GM12878 (cell line): ENCODE measurements at regions of chr17 and their contacts with region 1.

Region 1: DNA sequence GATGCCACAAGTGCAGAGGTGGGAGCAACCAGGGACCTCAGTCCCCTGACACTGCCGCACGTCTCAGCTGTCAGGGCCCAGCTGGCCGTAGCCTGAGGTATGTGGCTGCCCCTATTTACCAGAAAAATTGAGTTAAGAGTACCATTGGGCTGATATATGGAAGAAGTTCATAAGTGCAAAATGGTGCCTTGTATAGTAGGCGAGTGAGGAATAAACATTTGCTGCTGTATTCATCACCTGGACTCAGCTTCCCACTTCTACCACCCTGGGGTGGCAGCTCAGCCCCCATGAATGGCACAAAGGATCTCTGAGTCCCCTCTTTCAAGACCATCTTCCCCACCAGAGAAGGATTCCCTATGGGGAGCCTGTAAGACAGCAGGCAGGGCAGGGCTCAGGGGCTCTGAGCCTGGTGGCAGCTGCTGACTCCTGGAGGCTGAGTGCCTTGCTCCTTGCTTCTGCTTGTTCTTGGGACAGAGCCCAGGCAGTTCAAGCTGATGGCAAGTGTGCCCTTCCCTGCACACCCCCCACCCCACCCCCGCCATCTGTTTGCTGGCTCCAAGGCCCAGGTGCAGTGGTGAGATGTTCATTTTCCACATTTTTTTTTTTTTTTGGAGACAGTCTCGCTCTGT is 29.0 kb downstream of the TRPV2 start:
- DNase-seq: no peak
- ATAC-seq: peak; percentile 6
- H3K4me3 ChIP-seq: no peak overlapping the region
- H3K27ac ChIP-seq: no peak overlapping the region
- H3K4me1 ChIP-seq: peaks cover 11% of the 10 kb centered on the region
- H3K27me3 ChIP-seq: no peaks in the 10 kb centered on the region
- CTCF ChIP-seq: no peak
- EP300 ChIP-seq: no peak
- POLR2A ChIP-seq: peak; percentile 12; the same call in 1 of the 2 replicates
- RAD21 ChIP-seq: no peak

Region 2: DNA sequence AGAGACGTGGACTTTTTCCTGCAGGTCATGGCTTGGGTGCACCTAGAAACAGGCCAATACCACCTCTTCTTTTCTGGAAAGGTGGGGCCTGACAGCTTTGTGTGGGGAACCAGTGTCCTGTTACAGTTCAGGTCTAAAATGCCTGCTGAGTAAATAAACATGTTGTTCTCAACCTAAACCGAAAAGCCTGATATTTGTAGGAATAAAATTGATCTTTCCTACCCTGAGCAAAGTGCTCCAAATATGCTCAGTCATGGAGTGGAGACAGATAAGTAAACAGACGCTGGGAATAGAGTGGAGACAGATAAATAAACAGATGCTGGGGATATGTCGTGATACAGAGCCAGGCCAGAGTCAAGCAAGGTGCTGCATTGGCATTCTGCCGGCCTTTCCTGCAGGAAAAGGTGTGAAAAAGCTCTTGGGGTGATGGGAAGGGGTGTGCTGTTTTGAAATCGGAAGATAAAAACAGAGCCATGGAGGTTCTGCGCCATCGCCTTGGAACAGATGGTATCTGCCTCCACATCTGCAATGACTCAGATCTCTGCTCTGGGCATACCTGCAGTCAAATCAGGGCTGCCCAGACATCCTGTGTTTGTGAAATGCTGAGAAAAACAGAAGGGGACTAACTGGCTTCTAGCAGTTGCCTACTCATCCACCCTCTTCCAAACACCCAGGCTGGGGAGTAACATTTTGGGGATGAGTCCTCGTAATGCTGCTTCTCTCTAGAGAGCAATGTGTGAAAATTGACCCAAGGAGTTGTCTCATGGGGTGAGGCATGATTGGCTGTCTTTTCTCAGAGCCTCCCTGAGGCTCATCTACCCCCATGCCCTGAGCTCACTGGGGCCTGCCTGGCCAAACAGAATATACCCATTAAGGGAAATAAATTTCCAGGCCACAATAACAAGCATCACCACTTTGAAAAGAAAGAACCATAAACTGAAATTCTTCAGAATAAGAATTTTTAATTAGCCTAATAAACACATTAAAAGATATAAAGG is 45.8 kb before region 1 on chr17:
- CTCF ChIA-PET with region 1: no interaction called
- POLR2A ChIA-PET with region 1: interaction called, 6 read pairs
- RAD21 ChIA-PET with region 1: no interaction called
- SMC1A ChIA-PET with region 1: interaction called, 3 read pairs
- in situ Hi-C with region 1: loop called (anchors 5 kb)
- intact Hi-C with region 1: no loop called
- DNase-seq: peak; percentile 35
- ATAC-seq: peak; percentile 97
- H3K4me3 ChIP-seq: no peak overlapping the region
- H3K27ac ChIP-seq: no peak overlapping the region
- H3K4me1 ChIP-seq: peaks cover 7% of the 10 kb centered on the region
- H3K27me3 ChIP-seq: no peaks in the 10 kb centered on the region
- CTCF ChIP-seq: no peak
- EP300 ChIP-seq: no peak
- POLR2A ChIP-seq: no peak
- RAD21 ChIP-seq: no peak

Region 3: GRCh38 chr17:16493531-16494046 is 49.2 kb after region 1 on chr17:
- CTCF ChIA-PET with region 1: no interaction called
- POLR2A ChIA-PET with region 1: no interaction called
- RAD21 ChIA-PET with region 1: no interaction called
- SMC1A ChIA-PET with region 1: no interaction called
- in situ Hi-C with region 1: no loop called
- intact Hi-C with region 1: no loop called
- DNase-seq: no peak
- ATAC-seq: no peak
- H3K4me3 ChIP-seq: no peak overlapping the region
- H3K27ac ChIP-seq: no peak overlapping the region
- H3K4me1 ChIP-seq: no peaks in the 10 kb centered on the region
- H3K27me3 ChIP-seq: peaks cover 2 to 10% of the 10 kb centered on the region in 2 experiments; a peak in 3 of 4 replicates
- CTCF ChIP-seq: no peak
- EP300 ChIP-seq: no peak
- POLR2A ChIP-seq: no peak
- RAD21 ChIP-seq: no peak